Natural killer cell (primary cell): ENCODE measurements at regions of chr4 and their contacts with region 1.

Region 1: DNA sequence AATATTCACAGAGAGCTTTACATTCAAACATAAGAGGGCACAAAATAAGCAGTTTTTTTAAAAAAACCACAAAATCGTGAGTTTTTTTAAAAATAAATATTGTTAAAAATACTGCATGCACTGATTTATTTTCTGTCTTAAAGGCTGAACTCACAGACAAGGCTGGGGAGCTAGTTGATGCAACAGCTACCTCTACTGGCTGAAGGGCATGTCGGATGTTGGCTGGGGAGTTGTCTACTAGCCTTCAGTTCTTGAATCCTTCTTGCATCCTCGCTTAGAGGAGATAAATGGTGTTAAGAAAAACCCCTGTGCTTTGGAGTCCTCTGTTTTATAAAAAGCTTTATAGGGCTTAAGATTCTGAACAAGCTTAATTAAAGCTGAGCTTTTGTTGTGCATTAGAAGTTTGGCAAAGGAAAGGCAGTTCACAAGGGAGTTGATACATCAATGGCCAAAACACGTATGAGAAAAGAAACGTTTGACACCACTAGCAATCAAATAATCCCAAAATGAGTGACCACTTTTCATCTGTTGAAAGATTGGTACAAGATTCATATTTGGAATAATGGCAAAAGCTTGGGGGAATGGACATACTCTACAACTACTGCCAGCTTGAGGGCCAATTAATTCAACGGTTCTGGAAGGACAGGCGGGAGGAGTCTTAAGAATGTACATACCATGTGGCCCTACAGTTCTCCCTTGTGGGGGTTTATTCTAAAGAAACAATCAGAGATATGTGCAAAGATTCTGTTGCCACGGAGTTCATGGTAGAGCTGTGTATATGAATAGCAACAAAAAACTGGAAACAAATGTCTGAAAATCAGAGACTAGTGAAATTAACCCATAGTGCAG is 94.7 kb downstream of the SEL1L3 start:
- DNase-seq: peak in 1 of 2 donors; percentile 51
- ATAC-seq: peak in 2 of 3 donors; percentile 44 to 47
- H3K4me3 ChIP-seq: no peak overlapping the region
- H3K4me3 Mint-ChIP-seq: no peak overlapping the region
- H3K27ac ChIP-seq: no peak overlapping the region
- H3K27ac Mint-ChIP-seq: no peak overlapping the region
- H3K4me1 ChIP-seq: no peaks in the 10 kb centered on the region
- H3K4me1 Mint-ChIP-seq: no peaks in the 10 kb centered on the region
- H3K27me3 ChIP-seq: no peaks in the 10 kb centered on the region
- H3K27me3 Mint-ChIP-seq: no peaks in the 10 kb centered on the region
- CTCF ChIP-seq: peak; percentile 48

Region 2: DNA sequence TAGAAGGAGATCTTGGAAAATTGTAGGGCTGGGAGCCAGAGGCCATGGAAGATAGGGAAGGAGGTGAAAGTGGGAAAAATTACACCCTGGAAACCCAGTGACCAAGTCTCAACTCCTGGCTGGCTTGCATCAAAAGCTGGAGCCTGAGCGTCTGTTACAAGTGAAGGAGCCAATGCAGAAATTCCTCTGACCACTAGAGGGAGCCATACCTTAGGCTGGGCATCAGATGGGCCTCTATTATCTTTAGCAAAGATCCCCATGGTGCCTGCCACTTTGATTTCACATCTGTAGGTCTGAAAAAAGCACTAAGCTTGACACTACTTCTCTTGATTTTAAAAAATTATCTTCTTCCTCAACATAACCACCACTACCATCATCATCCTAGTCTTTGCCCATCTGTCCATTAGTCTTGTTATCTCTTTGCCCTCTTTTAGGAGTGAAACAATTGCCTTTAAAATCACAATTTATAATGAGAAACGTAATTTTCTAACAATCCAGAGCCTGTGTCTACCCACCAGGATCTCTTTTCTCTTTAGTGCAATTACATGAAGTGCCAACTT is 328.1 kb before region 1 on chr4:
- intact Hi-C with region 1: loop called (anchors 1 kb)
- DNase-seq: peak; percentile 19 to 71
- ATAC-seq: peak; percentile 71 to 81 (median 78)
- H3K4me3 ChIP-seq: no peak overlapping the region
- H3K4me3 Mint-ChIP-seq: no peak overlapping the region
- H3K27ac ChIP-seq: no peak overlapping the region
- H3K27ac Mint-ChIP-seq: no peak overlapping the region
- H3K4me1 ChIP-seq: no peaks in the 10 kb centered on the region
- H3K4me1 Mint-ChIP-seq: no peaks in the 10 kb centered on the region
- H3K27me3 ChIP-seq: no peaks in the 10 kb centered on the region
- H3K27me3 Mint-ChIP-seq: peaks cover 3 to 6% of the 10 kb centered on the region in 2 donors
- CTCF ChIP-seq: peak; percentile 86

Region 3: DNA sequence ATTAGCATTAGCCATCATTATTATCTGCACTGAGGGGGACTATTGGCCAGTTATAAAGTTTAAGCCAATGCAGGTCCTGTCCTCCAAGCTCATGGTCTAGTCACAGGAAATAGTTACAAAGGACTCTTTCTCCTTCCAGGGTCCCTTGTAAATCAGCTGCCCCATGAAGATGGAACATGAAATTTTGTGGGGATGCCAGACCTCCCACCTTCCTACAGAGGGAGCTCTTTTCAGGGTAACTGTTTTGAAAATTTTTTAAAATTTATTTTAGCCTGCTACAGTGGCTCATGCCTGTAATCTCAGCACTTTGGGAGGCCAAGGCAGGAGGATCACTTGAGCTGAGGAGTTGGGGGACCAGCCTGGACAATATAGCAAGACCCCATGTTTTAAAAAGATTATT is 236.8 kb before region 1 on chr4:
- intact Hi-C with region 1: loop called (anchors 5 kb)
- DNase-seq: no peak
- ATAC-seq: peak in 1 of 3 donors; percentile 21
- H3K4me3 ChIP-seq: no peak overlapping the region
- H3K4me3 Mint-ChIP-seq: no peak overlapping the region
- H3K27ac ChIP-seq: no peak overlapping the region
- H3K27ac Mint-ChIP-seq: no peak overlapping the region
- H3K4me1 ChIP-seq: no peaks in the 10 kb centered on the region
- H3K4me1 Mint-ChIP-seq: no peaks in the 10 kb centered on the region
- H3K27me3 ChIP-seq: no peaks in the 10 kb centered on the region
- H3K27me3 Mint-ChIP-seq: peaks cover 4 to 7% of the 10 kb centered on the region in 2 donors
- CTCF ChIP-seq: no peak